ENCODE measurements at regions of chr1 and their contacts with region 1.

Region 1: GRCh38 chr1:26787706-26788514 is at the start of gene PIGV:
- DNase-seq: peak; percentile 87
- H3K4me3 ChIP-seq: peak within 1 kb of the TSS; percentile 62
- H3K27ac ChIP-seq: peak within 1 kb of the TSS; percentile 98
- H3K4me1 ChIP-seq: peaks cover 20% of the 10 kb centered on the region
- H3K27me3 ChIP-seq: no peaks in the 10 kb centered on the region
- CTCF ChIP-seq: no peak
- total RNA-seq, gene PIGV: 16.8 to 24.2 TPM

Region 2: DNA sequence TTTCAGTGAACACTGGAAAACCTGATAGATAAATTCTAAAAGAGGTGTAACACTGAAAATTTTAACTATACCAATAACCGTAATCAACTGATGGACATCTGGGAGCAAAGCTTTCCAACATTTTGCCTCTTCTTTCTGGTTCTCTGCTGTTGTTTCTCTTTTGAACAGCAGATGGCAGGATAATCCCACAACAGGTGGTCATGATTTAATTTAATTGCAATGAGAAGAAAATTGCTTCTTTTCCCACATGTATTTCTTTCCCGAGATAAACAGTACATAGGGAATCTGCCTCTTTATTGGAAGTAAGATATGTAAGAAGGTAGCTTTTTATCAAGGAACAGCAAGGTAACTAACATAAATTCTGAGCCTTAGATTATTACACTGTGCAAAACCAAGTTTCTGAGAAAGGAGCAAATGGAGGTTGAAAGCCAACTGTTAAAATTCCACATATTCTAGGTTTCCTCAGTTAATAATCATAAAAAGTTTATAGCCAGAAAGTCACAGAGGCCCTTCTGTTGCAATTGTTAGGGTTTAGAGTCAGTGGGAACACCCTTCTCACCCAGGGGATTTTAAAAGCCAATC is 185.4 kb before region 1 on chr1:
- intact Hi-C with region 1: loop called (anchors 2 kb)
- DNase-seq: peak; percentile 69
- H3K4me3 ChIP-seq: no peak overlapping the region
- H3K27ac ChIP-seq: no peak overlapping the region
- H3K4me1 ChIP-seq: no peaks in the 10 kb centered on the region
- H3K27me3 ChIP-seq: no peaks in the 10 kb centered on the region
- CTCF ChIP-seq: peak; percentile 88

Region 3: DNA sequence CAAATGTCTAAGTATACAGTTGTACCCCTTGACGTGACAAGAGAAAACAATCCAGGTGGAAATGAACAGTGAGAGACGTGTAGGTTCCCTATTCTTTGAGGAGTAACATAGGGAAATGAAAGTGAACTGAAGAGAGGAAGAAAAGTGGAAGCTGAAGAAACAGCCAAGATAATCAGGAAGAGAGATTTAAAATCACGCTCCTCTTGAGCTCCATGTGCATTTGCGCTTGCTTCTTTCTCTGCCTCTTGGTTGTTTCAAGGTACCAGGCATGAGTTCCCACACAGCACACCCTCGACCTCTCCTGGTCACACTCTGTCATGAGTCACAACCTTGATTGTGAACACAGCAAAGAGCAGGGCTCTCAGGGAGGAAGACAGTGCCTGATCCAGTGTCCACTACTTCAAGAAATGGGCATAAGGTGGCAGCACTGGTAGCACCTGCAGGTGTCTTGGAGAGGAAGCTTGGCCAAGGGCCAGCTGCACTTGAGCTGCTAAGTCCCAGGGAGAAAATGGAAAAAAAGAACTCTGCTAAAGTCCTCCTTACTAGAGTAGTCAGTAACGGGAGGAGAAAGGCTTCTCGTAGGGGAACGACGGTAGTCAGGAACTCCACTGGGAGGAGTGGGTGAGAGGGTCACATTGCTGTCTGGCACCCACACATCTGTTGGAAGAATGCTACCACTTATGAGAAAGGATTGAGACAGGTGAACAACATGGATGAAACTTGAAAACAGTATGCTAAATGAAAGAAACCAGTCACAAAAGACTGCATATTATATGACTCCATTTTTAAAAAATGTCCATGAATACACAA is 110.4 kb before region 1 on chr1:
- intact Hi-C with region 1: loop called (anchors 2 kb)
- DNase-seq: peak; percentile 93
- H3K4me3 ChIP-seq: no peak overlapping the region
- H3K27ac ChIP-seq: peak overlapping the region; percentile 15
- H3K4me1 ChIP-seq: no peaks in the 10 kb centered on the region
- H3K27me3 ChIP-seq: no peaks in the 10 kb centered on the region
- CTCF ChIP-seq: peak; percentile 69

Region 4: DNA sequence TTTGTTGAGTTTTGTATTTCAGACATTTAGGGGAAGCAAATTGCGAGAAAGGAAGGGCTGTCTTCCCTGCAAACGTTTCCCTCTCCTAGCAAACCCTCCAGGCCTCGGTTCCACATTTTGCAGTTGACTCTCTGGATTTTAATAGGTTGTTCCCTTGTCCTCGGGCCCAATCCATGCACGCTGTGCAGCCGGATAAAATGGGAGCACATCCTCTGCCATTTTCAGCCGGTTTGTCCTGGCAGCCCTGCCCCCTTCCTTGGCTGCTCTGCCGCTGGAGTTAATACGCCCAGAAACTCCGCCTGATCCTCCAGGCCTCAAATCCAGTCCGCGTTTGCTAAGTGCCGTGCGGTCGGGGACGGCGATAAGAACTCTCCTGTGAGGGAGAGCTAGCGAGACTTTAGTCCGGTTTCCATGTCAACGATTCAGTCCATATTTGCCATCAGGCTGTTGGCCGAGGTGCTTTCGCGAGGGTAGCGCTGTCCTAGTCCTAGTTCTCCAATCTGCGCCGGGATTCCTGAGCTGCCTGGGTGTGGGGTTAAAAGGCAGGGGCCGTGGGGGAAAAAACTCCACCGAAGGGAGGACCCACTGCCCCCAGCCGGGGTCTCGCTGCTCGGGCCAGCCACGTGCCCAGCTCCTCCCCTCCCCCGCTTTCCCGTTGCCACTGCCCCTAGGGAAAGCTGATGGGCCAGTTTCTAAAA is 95.0 kb before region 1 on chr1:
- intact Hi-C with region 1: loop called (anchors 5 kb)
- DNase-seq: peak; percentile 99
- H3K4me3 ChIP-seq: peak overlapping the region; percentile 49
- H3K27ac ChIP-seq: peak overlapping the region; percentile 98
- H3K4me1 ChIP-seq: peaks cover 4% of the 10 kb centered on the region
- H3K27me3 ChIP-seq: no peaks in the 10 kb centered on the region
- CTCF ChIP-seq: no peak

Region 5: DNA sequence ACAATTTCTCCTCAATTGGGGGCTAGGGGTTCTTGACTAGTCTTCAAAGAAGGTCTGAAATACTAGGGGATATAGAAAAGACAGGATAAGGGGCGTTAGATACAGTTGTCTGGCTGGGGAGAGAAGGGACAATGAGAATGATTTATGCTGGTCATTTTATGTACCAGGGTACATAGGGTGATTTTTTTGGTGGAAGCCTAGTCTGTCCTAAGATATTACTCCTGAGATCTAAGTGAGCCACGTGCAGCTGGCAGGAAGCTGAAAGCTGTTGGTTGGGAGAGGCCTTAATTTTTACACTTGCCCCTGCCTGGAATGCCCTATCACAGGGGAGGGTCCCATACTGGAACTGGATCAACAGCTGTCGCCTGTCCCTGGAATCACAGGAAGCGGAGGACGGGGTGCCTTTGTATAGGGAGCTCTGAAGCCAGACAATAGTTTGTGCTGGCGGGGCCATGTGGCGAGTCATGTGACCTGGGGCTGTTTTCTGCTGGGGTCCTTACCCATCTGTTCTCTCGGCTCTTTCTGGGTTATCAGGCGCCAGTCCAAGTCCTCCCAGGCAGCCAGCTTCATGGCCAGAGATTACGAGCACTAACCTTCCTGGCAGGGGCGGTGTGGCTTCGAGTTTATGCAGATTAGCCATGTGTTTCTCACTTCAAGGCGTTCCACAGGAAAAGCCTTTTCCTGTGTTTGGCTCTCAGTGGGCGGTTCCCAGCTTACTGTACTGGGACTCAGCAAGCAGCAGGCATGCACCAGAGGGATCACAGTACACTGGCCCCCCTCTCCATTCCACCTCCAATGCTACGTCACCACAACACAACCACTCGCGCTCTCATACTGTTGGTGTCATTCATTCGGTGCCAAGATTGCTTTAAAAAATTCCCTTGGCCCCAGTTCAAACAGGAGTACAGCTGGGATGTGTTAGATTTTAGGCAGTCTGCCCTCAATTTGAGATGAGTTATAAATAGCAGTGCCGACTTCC is 64.6 kb before region 1 on chr1:
- intact Hi-C with region 1: loop called (anchors 10 kb)
- DNase-seq: peak; percentile 86
- H3K4me3 ChIP-seq: no peak overlapping the region
- H3K27ac ChIP-seq: peak overlapping the region; percentile 70
- H3K4me1 ChIP-seq: peaks cover 28% of the 10 kb centered on the region
- H3K27me3 ChIP-seq: no peaks in the 10 kb centered on the region
- CTCF ChIP-seq: no peak

Region 6: GRCh38 chr1:27136998-27137542 is 349.2 kb after region 1 on chr1:
- intact Hi-C with region 1: no loop called
- DNase-seq: peak; percentile 60
- H3K4me3 ChIP-seq: no peak overlapping the region
- H3K27ac ChIP-seq: peak overlapping the region; percentile 60
- H3K4me1 ChIP-seq: peaks cover 25% of the 10 kb centered on the region
- H3K27me3 ChIP-seq: no peaks in the 10 kb centered on the region
- CTCF ChIP-seq: no peak

Measured in colonic mucosa (tissue), 4 donors.